H1 (cell line): ENCODE measurements at regions of chr18 and their contacts with region 1.

Region 1: DNA sequence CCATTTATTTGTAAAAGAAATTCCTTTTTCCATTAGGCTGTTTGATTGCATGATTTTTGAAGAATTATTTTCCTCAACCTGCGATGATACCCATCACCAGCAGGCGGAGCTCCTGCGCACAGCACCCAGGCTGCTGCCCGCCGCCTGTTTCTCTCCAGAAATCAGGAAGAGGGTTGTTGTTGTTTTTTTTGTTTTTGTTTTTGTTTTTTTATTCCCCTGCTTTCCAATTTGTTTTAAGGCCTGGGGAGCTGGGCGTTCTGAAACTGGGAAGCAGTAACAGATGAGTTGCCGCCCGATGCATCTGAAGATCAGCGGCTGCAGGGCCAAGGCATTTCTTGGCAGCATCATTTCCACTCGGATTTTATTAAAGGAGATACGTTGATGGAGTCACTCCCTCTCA is 132.1 kb downstream of the MBP start:
- DNase-seq: peak in 1 of 2 experiments; percentile 81
- H3K4me3 ChIP-seq: no peak overlapping the region
- H3K27ac ChIP-seq: no peak overlapping the region
- H3K4me1 ChIP-seq: no peaks in the 10 kb centered on the region
- H3K27me3 ChIP-seq: no peaks in the 10 kb centered on the region; a peak in 1 of 7 replicates
- CTCF ChIP-seq: peak; percentile 86 to 89 (median 86)
- EP300 ChIP-seq: no peak
- POLR2A ChIP-seq: no peak
- RAD21 ChIP-seq: peak; percentile 83 to 87

Region 2: DNA sequence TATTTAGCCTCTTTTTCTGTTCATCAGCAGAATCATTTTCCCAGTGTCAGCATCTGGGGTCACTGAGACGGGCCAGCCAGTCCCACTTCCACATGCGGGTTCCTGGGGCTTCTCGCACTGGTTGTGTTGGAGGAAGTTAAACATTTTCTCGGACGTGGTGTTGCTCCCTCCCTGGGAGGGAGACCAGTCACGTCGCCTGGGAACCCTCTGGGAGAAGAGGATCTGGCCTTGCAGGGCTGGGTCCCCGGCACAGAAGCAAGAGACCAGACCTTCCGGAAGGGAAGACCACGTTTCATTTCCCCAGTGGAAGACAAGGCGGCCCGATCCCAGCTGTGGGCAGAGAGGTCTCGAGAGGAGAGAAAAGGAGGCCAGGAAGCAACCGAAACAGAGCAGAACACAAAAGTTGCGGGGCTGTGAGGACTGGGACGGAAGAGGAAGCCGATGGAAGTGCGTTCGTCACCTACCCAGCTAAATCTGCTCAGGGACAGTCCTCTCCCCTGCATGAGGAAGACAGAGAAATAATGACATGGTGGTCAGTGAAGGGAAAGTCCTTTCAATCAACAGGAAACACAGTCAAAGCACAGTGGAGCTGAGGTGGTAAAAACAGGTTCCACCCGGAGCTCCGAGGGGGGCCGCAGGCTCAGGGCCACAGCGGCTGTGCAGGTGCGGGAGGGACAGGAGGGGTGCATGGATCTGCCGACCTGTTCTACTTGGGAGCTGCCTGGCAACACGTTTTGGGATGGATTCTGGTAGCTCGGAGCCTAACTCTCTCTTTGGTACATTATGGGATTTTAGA is 12.3 kb before region 1 on chr18:
- CTCF ChIA-PET with region 1: interaction called, 38 read pairs
- POLR2A ChIA-PET with region 1: interaction called, 4 read pairs
- DNase-seq: peak in 1 of 2 experiments; percentile 42
- H3K4me3 ChIP-seq: no peak overlapping the region
- H3K27ac ChIP-seq: no peak overlapping the region
- H3K4me1 ChIP-seq: peaks cover 0 to 13% (median 7%) of the 10 kb centered on the region in 4 experiments; a peak in 5 of 7 replicates
- H3K27me3 ChIP-seq: no peaks in the 10 kb centered on the region
- CTCF ChIP-seq: no peak
- EP300 ChIP-seq: no peak
- POLR2A ChIP-seq: no peak
- RAD21 ChIP-seq: no peak

Region 3: GRCh38 chr18:77035380-77036187 is 35.1 kb after region 1 on chr18:
- CTCF ChIA-PET with region 1: interaction called, 15 read pairs
- POLR2A ChIA-PET with region 1: no interaction called
- DNase-seq: no peak
- H3K4me3 ChIP-seq: no peak overlapping the region
- H3K27ac ChIP-seq: no peak overlapping the region
- H3K4me1 ChIP-seq: no peaks in the 10 kb centered on the region
- H3K27me3 ChIP-seq: no peaks in the 10 kb centered on the region
- CTCF ChIP-seq: no peak
- EP300 ChIP-seq: no peak
- POLR2A ChIP-seq: no peak
- RAD21 ChIP-seq: no peak

Region 4: DNA sequence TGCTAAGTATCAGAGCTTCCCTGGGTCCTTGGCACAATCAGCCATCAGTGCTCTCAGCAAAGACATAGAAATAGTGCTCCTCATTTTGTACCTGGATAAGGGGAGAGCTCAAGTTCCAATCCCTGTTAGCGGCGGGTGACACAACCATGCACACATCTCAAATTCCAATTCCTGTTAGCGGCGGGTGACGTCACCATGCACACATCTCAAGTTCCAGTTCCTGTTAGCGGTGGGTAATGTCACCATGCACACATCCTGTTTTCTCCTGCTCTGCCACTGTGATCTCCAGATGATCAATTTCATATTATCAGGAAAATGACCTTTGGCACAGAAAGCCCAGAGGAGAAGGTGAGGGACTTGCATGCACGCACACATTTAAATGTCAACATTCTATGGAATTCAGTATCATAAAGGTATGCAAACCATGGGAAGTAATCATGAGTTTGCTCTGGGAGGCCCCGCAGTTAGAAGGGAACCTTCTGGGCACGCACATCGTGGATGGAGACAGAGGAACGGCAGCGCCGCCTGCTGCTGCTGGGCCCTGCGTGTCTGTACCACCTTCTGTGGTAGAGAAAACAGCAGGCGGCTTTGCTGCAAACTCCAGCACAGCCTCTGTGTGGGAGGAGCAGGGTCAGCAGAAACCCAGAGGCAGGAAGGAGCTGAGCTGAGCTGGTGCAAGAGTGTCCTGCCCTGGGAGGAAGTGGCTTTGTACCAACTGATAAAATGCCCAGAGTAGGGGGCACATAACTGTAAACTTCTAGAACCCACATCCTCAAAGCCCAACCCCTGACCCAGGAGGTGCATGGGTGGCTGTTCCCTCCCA is 54.3 kb after region 1 on chr18:
- CTCF ChIA-PET with region 1: interaction called, 31 read pairs
- POLR2A ChIA-PET with region 1: no interaction called
- DNase-seq: peak in 1 of 2 experiments; percentile 33
- H3K4me3 ChIP-seq: no peak overlapping the region
- H3K27ac ChIP-seq: no peak overlapping the region
- H3K4me1 ChIP-seq: peaks cover 15 to 32% (median 21%) of the 10 kb centered on the region in 4 experiments
- H3K27me3 ChIP-seq: no peaks in the 10 kb centered on the region
- CTCF ChIP-seq: peak; percentile 52 to 60 (median 59)
- EP300 ChIP-seq: no peak
- POLR2A ChIP-seq: no peak
- RAD21 ChIP-seq: peak; percentile 60 to 61

Region 5: GRCh38 chr18:77068321-77069312 is 68.1 kb after region 1 on chr18:
- CTCF ChIA-PET with region 1: interaction called, 20 read pairs
- POLR2A ChIA-PET with region 1: no interaction called
- DNase-seq: no peak
- H3K4me3 ChIP-seq: no peak overlapping the region
- H3K27ac ChIP-seq: no peak overlapping the region
- H3K4me1 ChIP-seq: peaks cover 0 to 6% (median 2%) of the 10 kb centered on the region in 4 experiments; a peak in 4 of 7 replicates
- H3K27me3 ChIP-seq: no peaks in the 10 kb centered on the region
- CTCF ChIP-seq: no peak
- EP300 ChIP-seq: no peak
- POLR2A ChIP-seq: no peak
- RAD21 ChIP-seq: no peak